Mammary epithelial cell (primary cell): ENCODE measurements at regions of chr16 and their contacts with region 1.

Region 1: DNA sequence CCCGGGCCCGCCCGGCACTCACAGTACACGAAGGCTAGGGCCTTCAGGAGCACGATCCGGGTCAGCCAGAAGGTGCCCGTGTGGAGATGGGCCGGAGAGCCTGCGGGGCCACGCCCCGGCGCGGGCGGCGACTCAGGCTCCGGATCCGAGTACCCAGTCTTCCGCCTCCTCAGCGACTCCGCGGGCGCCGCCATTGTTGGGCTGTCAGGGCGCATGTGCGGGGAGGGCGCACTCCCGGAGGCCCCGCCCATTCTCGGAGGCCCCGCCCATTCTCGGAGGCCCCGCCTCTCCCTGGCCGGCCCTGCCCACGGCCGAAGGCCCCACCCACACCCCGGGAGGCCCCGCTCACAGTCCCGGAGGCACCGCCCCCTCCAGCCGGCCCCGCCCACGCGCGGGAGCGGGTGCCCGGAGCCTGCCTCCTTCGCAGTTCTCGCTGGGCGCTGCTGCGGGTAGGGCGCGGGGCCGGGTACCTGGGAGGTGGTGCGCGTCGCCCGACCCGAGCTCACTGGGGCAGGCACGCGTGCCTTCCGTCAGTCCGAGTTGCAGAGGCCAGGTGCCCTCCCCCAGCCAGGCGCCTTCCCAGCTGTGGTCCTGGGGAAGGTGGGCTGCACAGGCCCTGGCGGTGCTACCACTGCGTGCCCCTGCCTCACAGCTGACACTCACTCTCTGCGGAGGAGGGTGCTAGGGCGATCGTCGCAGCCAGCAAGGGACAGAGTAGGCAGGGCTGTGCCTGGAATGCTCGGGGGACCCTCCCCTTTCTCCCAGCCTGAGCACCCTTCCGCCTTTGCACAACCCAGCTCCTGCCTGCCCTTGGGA is at the start of gene LMF1:
- DNase-seq: peak; percentile 86
- H3K4me3 ChIP-seq: peak within 1 kb of the TSS; percentile 40 to 72 (median 64)
- H3K27ac ChIP-seq: no peak within 1 kb of the TSS
- H3K4me1 ChIP-seq: peaks cover 13% of the 10 kb centered on the region
- H3K27me3 ChIP-seq: no peaks in the 10 kb centered on the region
- CTCF ChIP-seq: no peak
- total RNA-seq, gene LMF1: 11.0 to 25.3 TPM

Region 2: DNA sequence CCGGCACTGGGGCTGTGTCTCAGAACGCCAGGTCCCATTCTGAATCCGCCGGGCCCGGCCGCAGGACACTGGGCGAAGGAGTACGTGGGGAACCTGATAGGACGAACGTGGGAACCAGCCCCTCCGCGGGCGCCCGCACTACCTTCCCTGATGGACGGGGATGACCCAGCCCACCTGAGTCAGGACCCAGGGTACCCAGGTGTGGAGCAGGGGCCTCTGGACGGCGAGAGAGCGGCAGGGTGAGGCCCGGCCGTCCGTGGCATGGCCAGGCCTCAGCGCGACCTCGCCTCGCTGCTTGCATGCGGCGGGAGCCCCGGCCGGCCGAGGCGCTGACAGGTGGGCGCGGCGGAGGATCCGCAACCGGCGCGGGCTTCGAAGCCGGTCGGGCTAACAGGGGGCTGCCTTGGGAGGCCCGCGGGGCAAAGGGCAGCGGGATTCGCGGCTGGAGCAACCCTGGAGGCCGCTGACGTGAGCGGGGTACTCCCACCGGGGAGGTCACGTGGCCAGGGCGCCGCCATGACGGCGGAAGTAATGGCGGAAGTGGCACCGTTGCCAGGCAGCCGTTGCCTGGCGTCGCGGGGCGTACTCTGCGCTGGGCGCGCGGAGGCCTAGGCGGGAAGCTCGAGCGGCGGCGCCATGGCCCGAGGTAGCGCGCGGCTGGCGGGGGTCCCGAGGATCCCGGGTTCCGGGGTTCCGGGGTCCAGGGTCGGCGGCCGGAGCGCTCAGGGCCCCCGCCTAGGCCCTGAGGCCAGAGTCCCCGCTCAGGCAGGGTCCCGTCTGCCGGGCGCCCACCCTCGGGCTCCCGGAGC is 322.0 kb before region 1 on chr16 and contains the start of gene WDR90:
- CTCF ChIA-PET with region 1: no interaction called
- dilution Hi-C with region 1: loop called (anchors 10 kb)
- in situ Hi-C with region 1: no loop called
- intact Hi-C with region 1: no loop called
- DNase-seq: peak; percentile 89
- H3K4me3 ChIP-seq: peak within 1 kb of the TSS; percentile 64 to 68 (median 67)
- H3K27ac ChIP-seq: peak within 1 kb of the TSS; percentile 73
- H3K4me1 ChIP-seq: peaks cover 30% of the 10 kb centered on the region
- H3K27me3 ChIP-seq: no peaks in the 10 kb centered on the region
- CTCF ChIP-seq: no peak
- total RNA-seq, gene WDR90: 7.5 to 41.7 TPM

Region 3: GRCh38 chr16:894841-895240 is 76.1 kb before region 1 on chr16:
- CTCF ChIA-PET with region 1: no interaction called
- dilution Hi-C with region 1: loop called (anchors 5 kb)
- in situ Hi-C with region 1: no loop called
- intact Hi-C with region 1: no loop called
- DNase-seq: no peak
- H3K4me3 ChIP-seq: no peak overlapping the region
- H3K27ac ChIP-seq: no peak overlapping the region
- H3K4me1 ChIP-seq: no peaks in the 10 kb centered on the region
- H3K27me3 ChIP-seq: no peaks in the 10 kb centered on the region
- CTCF ChIP-seq: no peak

Region 4: DNA sequence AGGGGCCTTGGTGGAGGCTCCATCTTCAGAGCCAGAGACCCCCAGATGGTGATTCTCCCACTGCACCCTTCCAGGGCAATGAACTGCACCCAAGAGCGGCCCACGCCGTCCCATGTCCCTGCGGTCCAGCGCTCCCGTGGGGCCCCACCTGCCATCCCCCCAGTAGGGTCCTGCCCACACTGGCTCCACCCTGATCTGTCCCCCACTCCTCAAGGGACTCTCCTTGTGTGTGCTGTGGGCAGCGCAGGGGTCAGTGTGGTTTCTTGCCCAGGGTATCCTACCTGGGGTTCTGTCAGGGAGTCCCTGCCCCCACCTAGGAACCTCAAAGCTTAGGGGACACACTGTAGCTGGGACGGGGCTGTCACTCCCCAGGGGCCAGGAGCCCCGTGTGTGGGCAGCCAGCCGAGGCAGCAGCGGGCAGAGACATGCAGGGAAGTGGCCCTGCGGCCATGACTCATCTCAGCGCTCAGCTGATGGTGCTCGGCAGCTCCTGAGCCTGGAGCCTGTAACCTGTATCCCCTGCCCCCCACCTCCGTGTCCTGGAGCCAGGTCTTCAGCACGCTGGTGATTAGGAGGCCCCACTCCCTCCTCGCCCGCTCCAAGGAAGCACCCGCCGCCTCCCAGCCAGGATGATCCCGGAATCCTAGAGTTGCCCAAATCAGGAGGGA is 65.9 kb after region 1 on chr16:
- CTCF ChIA-PET with region 1: no interaction called
- dilution Hi-C with region 1: loop called (anchors 5 kb)
- in situ Hi-C with region 1: no loop called
- intact Hi-C with region 1: loop called (anchors 10 kb)
- DNase-seq: peak; percentile 75
- H3K4me3 ChIP-seq: peak overlapping the region in 1 of 3 experiments; percentile 9
- H3K27ac ChIP-seq: no peak overlapping the region
- H3K4me1 ChIP-seq: peaks cover 14% of the 10 kb centered on the region
- H3K27me3 ChIP-seq: no peaks in the 10 kb centered on the region
- CTCF ChIP-seq: no peak

Region 5: GRCh38 chr16:1188432-1189189 is 217.6 kb after region 1 on chr16:
- CTCF ChIA-PET with region 1: no interaction called
- dilution Hi-C with region 1: no loop called
- in situ Hi-C with region 1: no loop called
- intact Hi-C with region 1: no loop called
- DNase-seq: peak; percentile 19
- H3K4me3 ChIP-seq: no peak overlapping the region
- H3K27ac ChIP-seq: no peak overlapping the region
- H3K4me1 ChIP-seq: no peaks in the 10 kb centered on the region
- H3K27me3 ChIP-seq: no peaks in the 10 kb centered on the region
- CTCF ChIP-seq: no peak

Region 6: DNA sequence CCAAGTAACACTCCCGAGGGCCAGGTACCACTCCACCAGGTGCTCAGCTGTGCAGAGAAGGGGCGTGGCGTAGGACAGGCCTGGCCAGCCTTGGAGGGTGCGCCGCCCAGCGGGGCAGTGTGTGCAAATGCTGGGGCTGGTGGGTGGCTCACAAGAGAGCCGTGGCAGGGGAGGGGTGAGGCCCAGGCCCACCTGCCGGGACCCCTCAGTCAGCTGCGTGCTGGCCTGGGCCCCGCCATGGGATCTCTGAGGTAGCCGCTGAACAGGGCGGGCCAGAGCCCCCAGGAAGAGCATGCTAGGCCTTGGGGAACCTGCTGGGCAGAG is 245.3 kb after region 1 on chr16:
- CTCF ChIA-PET with region 1: no interaction called
- dilution Hi-C with region 1: loop called (anchors 10 kb)
- in situ Hi-C with region 1: no loop called
- intact Hi-C with region 1: no loop called
- DNase-seq: no peak
- H3K4me3 ChIP-seq: no peak overlapping the region
- H3K27ac ChIP-seq: no peak overlapping the region
- H3K4me1 ChIP-seq: no peaks in the 10 kb centered on the region
- H3K27me3 ChIP-seq: peaks cover 2% of the 10 kb centered on the region
- CTCF ChIP-seq: no peak

Region 7: DNA sequence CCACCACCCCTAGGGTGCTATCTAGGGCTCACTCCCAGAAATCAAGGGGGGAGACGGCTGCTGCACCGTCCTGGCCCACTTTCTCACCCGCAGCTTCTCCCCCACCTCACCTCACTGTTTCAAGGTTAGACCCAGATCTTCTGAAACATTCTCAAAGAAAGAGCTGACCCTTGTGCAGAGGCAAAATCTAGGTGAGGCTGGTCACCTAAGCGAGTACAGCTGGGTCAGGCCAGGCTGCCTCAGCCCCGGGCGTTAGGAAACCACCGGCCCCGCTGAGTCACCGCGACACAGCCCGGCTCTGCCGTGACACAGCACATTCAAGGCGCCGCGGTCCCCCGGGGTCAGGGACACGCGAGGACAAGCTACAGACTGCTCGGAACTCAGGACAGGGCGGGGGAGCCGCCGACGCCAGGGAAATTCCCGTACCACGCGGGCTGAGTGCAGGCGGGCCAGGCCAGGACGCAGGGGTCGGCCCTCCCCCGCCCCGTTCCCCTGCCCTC is 407.9 kb after region 1 on chr16:
- CTCF ChIA-PET with region 1: no interaction called
- dilution Hi-C with region 1: loop called (anchors 5 kb)
- in situ Hi-C with region 1: no loop called
- intact Hi-C with region 1: no loop called
- DNase-seq: peak; percentile 85
- H3K4me3 ChIP-seq: peak overlapping the region; percentile 36 to 47 (median 45)
- H3K27ac ChIP-seq: peak overlapping the region; percentile 57
- H3K4me1 ChIP-seq: peaks cover 14% of the 10 kb centered on the region
- H3K27me3 ChIP-seq: no peaks in the 10 kb centered on the region
- CTCF ChIP-seq: no peak